ENCODE measurements at regions of chr1 and their contacts with region 1.

Region 1: DNA sequence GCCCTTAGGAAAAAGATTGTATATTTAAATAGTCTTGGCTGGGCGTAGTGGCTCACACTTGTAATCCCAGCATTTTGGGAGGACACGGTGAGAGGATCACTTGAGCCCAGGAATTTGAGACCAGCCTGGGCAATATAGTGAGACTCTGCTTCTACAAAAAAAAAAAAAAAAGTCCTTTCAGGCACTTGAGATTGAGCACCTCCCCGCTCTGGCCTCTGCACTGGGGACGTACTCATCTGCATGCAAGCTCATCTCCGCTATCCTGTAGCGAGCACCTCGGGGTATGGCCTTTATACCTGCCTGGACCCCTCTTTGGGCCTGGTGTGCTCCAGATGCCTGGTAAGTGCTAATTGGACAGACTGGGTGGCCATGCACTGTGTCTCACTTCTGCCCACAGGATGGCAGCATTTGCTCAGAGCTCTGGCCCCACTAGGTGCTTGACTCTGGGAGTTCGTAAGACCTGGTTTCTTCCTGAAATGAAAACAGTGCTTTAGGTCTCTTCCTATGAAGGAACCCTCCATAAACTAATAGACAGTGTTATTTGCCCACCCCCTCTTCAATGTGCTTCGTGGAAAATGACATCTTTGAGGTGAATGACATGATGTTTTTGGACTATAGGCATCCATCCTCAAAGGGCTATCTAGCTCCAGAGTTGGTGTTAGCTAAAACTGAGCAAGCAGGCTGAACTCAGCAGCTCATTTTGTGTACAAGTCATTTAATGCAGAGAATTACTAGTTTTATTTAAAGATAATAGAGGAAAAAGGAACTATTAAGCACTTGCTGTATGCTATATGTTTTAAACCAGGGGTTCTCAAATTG is 61.7 kb upstream of the ADAR start:
- DNase-seq: peak in 2 of 3 donors; percentile 72 to 75
- ATAC-seq: peak; percentile 86
- H3K4me3 ChIP-seq: no peak overlapping the region
- H3K4me1 ChIP-seq: no peaks in the 10 kb centered on the region
- CTCF ChIP-seq: peak; percentile 26

Region 2: GRCh38 chr1:154176337-154176736 is 493.3 kb before region 1 on chr1:
- intact Hi-C with region 1: no loop called
- DNase-seq: peak in 1 of 3 donors; percentile 73
- ATAC-seq: peak; percentile 73
- H3K4me3 ChIP-seq: no peak overlapping the region
- H3K4me1 ChIP-seq: peaks cover 59% of the 10 kb centered on the region
- CTCF ChIP-seq: no peak

Region 3: DNA sequence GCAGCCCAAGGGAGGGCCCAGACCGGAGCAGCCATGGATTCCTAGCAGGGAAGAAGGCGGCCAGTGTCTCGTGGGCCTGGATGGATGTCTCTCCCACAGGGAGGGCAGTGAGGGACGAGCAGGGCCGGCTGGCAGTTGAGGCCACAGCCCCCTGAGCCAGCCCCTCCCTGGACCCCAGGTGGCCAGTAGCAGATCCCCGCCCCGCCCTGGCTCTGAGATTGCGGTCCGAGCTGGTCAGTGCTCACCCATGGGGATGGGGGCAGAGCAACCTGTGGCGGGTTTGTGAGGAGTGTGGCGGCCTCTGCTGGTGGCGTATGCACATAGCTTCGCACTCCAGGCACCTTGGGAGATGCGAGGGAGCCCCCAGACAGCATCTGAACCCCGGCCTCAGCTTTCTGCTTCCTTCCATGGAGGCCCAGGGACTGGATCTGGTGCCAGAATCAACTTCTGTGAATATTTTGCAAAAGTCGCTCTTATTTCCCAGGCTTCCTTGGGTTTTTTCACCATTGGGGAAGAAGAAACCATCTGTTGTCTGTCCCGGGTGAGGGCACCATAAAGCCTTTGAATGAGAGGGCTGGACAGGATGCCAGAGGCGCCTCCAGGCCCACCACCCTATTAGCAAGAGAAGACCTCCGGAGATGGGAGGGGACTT is 208.8 kb after region 1 on chr1:
- intact Hi-C with region 1: loop called in 1 of 2 experiments (anchors 5 kb)
- DNase-seq: peak; percentile 74 to 84 (median 83)
- ATAC-seq: peak; percentile 91
- H3K4me3 ChIP-seq: no peak overlapping the region
- H3K4me1 ChIP-seq: peaks cover 5% of the 10 kb centered on the region
- CTCF ChIP-seq: peak; percentile 87

Measured in mucosa of descending colon (tissue), 3 donors.